Breast epithelium (tissue), 4 donors: ENCODE measurements at regions of chr7 and their contacts with region 1.

Region 1: GRCh38 chr7:45146531-45147379 is 10.8 kb upstream of the RAMP3 start:
- DNase-seq: no peak
- H3K4me3 ChIP-seq: no peak overlapping the region
- H3K27ac ChIP-seq: no peak overlapping the region
- H3K4me1 ChIP-seq: no peaks in the 10 kb centered on the region
- H3K27me3 ChIP-seq: no peaks in the 10 kb centered on the region
- CTCF ChIP-seq: no peak
- POLR2A ChIP-seq: no peak

Region 2: GRCh38 chr7:45174966-45175765 is 28.4 kb after region 1 on chr7:
- intact Hi-C with region 1: loop called (anchors 1 kb)
- DNase-seq: peak in 1 of 2 donors; percentile 25
- H3K4me3 ChIP-seq: no peak overlapping the region
- H3K27ac ChIP-seq: no peak overlapping the region
- H3K4me1 ChIP-seq: no peaks in the 10 kb centered on the region
- H3K27me3 ChIP-seq: peaks cover 0 to 4% of the 10 kb centered on the region in 2 donors
- CTCF ChIP-seq: no peak
- POLR2A ChIP-seq: no peak

Region 3: GRCh38 chr7:45863715-45864114 is 717.0 kb after region 1 on chr7:
- intact Hi-C with region 1: loop called (anchors 10 kb)
- DNase-seq: no peak
- H3K4me3 ChIP-seq: no peak overlapping the region
- H3K27ac ChIP-seq: no peak overlapping the region
- H3K4me1 ChIP-seq: no peaks in the 10 kb centered on the region
- H3K27me3 ChIP-seq: no peaks in the 10 kb centered on the region
- CTCF ChIP-seq: no peak
- POLR2A ChIP-seq: no peak